ENCODE measurements at regions of chr13 and their contacts with region 1.

Region 1: GRCh38 chr13:109938255-109938936 is 152.0 kb upstream of the IRS2 start:
- DNase-seq: no peak
- H3K4me3 ChIP-seq: no peak overlapping the region
- H3K27ac ChIP-seq: no peak overlapping the region
- H3K4me1 ChIP-seq: no peaks in the 10 kb centered on the region
- H3K27me3 ChIP-seq: no peaks in the 10 kb centered on the region
- CTCF ChIP-seq: no peak
- POLR2A ChIP-seq: no peak

Region 2: GRCh38 chr13:110023729-110024644 is 85.6 kb after region 1 on chr13:
- intact Hi-C with region 1: loop called (anchors 10 kb)
- DNase-seq: no peak
- H3K4me3 ChIP-seq: no peak overlapping the region
- H3K27ac ChIP-seq: peak overlapping the region; percentile 51 to 61
- H3K4me1 ChIP-seq: no peaks in the 10 kb centered on the region
- H3K27me3 ChIP-seq: no peaks in the 10 kb centered on the region
- CTCF ChIP-seq: no peak
- POLR2A ChIP-seq: no peak

Region 3: DNA sequence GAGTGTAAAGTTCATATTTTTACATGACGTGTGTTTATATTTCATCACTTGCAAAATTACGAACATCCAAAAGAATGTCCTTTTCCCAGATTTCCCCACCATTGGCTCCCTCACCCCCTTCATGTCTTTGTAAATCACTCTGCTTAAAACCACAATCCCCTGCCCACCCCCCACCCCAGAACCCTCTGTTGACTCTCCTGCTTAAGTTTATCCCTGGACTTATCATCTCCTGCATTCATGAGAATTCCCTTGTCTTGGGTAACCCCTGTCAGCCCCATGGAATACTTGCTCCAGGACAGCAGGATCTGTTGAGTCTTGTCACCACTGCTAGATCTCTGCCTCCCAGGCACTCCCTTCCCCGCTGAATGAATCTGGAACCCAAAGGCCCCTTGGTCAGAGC is 258.6 kb after region 1 on chr13:
- intact Hi-C with region 1: no loop called
- DNase-seq: no peak
- H3K4me3 ChIP-seq: no peak overlapping the region
- H3K27ac ChIP-seq: no peak overlapping the region
- H3K4me1 ChIP-seq: no peaks in the 10 kb centered on the region
- H3K27me3 ChIP-seq: no peaks in the 10 kb centered on the region
- CTCF ChIP-seq: no peak
- POLR2A ChIP-seq: no peak